CD4-positive, alpha-beta T cell (primary cell): ENCODE measurements at regions of chr5 and their contacts with region 1.

Region 1: DNA sequence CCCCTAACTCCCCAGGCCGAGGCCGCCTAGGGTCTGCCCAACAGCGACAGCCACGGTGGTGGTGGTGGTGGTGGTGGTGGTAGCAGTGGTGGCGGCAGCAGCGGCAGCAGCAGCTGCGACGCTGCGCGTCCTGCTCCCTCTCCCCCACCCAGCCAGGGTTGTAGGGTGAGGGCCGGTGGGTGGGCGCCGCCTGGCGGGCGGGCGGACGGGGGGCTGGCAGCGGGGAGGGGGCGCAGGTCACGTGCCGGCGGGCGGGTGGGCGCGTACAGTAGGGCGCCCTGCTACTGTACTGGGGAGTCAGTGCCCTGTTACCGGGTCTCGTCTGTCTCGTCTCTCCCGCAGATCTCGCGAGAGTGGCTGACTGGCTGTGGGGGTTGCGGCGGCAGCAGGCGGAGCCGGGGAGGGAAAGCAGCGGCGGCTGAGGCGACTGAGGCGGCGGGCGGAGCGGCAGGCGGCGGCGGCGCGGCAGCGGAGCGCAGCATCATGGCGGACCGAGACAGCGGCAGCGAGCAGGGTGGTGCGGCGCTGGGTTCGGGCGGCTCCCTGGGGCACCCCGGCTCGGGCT is at the start of gene PURA:
- DNase-seq: peak; percentile 95 to 98 (median 97)
- ATAC-seq: peak; percentile 93
- H3K4me3 ChIP-seq: peak within 1 kb of the TSS; percentile 84
- H3K4me3 Mint-ChIP-seq: peak within 1 kb of the TSS; percentile 100
- H3K27ac ChIP-seq: peak within 1 kb of the TSS; percentile 82 to 83
- H3K27ac Mint-ChIP-seq: peak within 1 kb of the TSS; percentile 96
- H3K4me1 ChIP-seq: peaks cover 40% of the 10 kb centered on the region
- H3K4me1 Mint-ChIP-seq: peaks cover 90% of the 10 kb centered on the region
- H3K27me3 ChIP-seq: peaks cover 8 to 10% of the 10 kb centered on the region in 2 experiments
- H3K27me3 Mint-ChIP-seq: peaks cover 6% of the 10 kb centered on the region
- CTCF ChIP-seq: no peak
- total RNA-seq, gene PURA: 7.0 to 7.9 TPM

Region 2: GRCh38 chr5:140073296-140073695 is 40.5 kb before region 1 on chr5:
- CTCF ChIA-PET with region 1: interaction called, 4 read pairs
- POLR2A ChIA-PET with region 1: interaction called, 7 read pairs
- intact Hi-C with region 1: loop called (anchors 2 kb)
- DNase-seq: peak in 3 of 14 experiments; percentile 49 to 67 (median 64)
- ATAC-seq: no peak
- H3K4me3 ChIP-seq: no peak overlapping the region
- H3K4me3 Mint-ChIP-seq: no peak overlapping the region
- H3K27ac ChIP-seq: no peak overlapping the region
- H3K27ac Mint-ChIP-seq: no peak overlapping the region
- H3K4me1 ChIP-seq: no peaks in the 10 kb centered on the region
- H3K4me1 Mint-ChIP-seq: no peaks in the 10 kb centered on the region
- H3K27me3 ChIP-seq: peaks cover 7 to 10% of the 10 kb centered on the region in 2 experiments
- H3K27me3 Mint-ChIP-seq: peaks cover 36% of the 10 kb centered on the region
- CTCF ChIP-seq: peak; percentile 83

Region 3: GRCh38 chr5:140157032-140157803 is 43.4 kb after region 1 on chr5:
- CTCF ChIA-PET with region 1: no interaction called
- POLR2A ChIA-PET with region 1: no interaction called
- intact Hi-C with region 1: loop called in 1 of 2 experiments (anchors 5 kb)
- DNase-seq: peak; percentile 79 to 93 (median 84)
- ATAC-seq: peak; percentile 100
- H3K4me3 ChIP-seq: no peak overlapping the region
- H3K4me3 Mint-ChIP-seq: peak overlapping the region; percentile 50
- H3K27ac ChIP-seq: no peak overlapping the region
- H3K27ac Mint-ChIP-seq: peak overlapping the region; percentile 21
- H3K4me1 ChIP-seq: peaks cover 10% of the 10 kb centered on the region
- H3K4me1 Mint-ChIP-seq: peaks cover 15% of the 10 kb centered on the region
- H3K27me3 ChIP-seq: no peaks in the 10 kb centered on the region
- H3K27me3 Mint-ChIP-seq: no peaks in the 10 kb centered on the region
- CTCF ChIP-seq: peak; percentile 86